Activated CD8-positive, alpha-beta T cell treated with anti-CD3 and anti-CD28 coated beads, Interleukin-2, amount 10 ng/mL, durations not matched to agents 7 days and 5 days (primary cell): ENCODE measurements at regions of chr13 and their contacts with region 1.

Region 1: DNA sequence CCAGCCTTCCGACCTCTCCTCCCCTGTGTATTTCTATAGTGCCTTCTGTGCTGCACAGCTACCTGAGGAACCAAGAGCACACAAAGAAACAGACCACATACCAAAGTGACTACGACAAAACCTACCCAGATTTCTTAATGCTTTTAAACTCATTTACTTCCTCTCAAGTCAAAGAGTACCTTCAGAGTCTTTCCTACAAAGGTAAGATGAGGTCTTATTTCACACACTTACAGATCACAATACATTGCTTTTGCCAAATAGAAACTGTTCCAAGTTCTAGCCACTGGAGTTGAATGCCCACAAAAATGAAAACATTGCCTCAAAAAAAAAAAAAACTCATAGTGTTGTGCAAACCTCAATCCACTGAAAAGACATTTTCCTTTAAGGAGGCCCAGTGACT is 36.4 kb downstream of the TEX26 start:
- DNase-seq: no peak
- ATAC-seq: no peak
- H3K4me3 Mint-ChIP-seq: no peak overlapping the region
- H3K27ac Mint-ChIP-seq: no peak overlapping the region
- H3K4me1 Mint-ChIP-seq: no peaks in the 10 kb centered on the region
- H3K27me3 Mint-ChIP-seq: peaks cover 40% of the 10 kb centered on the region

Region 2: GRCh38 chr13:30978981-30979956 is 10.4 kb after region 1 on chr13:
- CTCF ChIA-PET with region 1: interaction called, 20 read pairs
- POLR2A ChIA-PET with region 1: no interaction called
- DNase-seq: peak; percentile 48
- ATAC-seq: no peak
- H3K4me3 Mint-ChIP-seq: no peak overlapping the region
- H3K27ac Mint-ChIP-seq: no peak overlapping the region
- H3K4me1 Mint-ChIP-seq: no peaks in the 10 kb centered on the region
- H3K27me3 Mint-ChIP-seq: peaks cover 34% of the 10 kb centered on the region